Caco-2 (cell line): ENCODE measurements at regions of chr12 and their contacts with region 1.

Region 1: GRCh38 chr12:19129486-19130223 is at the start of gene PLEKHA5:
- DNase-seq: peak; percentile 88
- H3K4me3 ChIP-seq: peak within 1 kb of the TSS; percentile 75
- H3K4me3 Mint-ChIP-seq: peak within 1 kb of the TSS; percentile 91
- H3K27ac Mint-ChIP-seq: peak within 1 kb of the TSS; percentile 63
- H3K4me1 ChIP-seq: 0 out of 2 replicates have a peak, but pooled peaks cover 13% of the 10 kb centered on the region
- H3K4me1 Mint-ChIP-seq: peaks cover 11% of the 10 kb centered on the region
- H3K27me3 ChIP-seq: no peaks in the 10 kb centered on the region
- H3K27me3 Mint-ChIP-seq: no peaks in the 10 kb centered on the region
- CTCF ChIP-seq: peak; percentile 36 to 74
- total RNA-seq, gene PLEKHA5: 69.1 and 79.2 TPM in 2 replicates

Region 2: GRCh38 chr12:18861287-18861858 is 268.3 kb before region 1 on chr12:
- CTCF ChIA-PET with region 1: no interaction called
- POLR2A ChIA-PET with region 1: no interaction called
- intact Hi-C with region 1: loop called (anchors 1 kb)
- DNase-seq: peak in 1 of 2 experiments; percentile 56
- H3K4me3 ChIP-seq: no peak overlapping the region
- H3K4me3 Mint-ChIP-seq: no peak overlapping the region
- H3K27ac Mint-ChIP-seq: no peak overlapping the region
- H3K4me1 ChIP-seq: no peaks in the 10 kb centered on the region
- H3K4me1 Mint-ChIP-seq: no peaks in the 10 kb centered on the region
- H3K27me3 ChIP-seq: no peaks in the 10 kb centered on the region; the same call in 1 of the 2 replicates
- H3K27me3 Mint-ChIP-seq: peaks cover 13% of the 10 kb centered on the region
- CTCF ChIP-seq: peak; percentile 66 to 92

Region 3: DNA sequence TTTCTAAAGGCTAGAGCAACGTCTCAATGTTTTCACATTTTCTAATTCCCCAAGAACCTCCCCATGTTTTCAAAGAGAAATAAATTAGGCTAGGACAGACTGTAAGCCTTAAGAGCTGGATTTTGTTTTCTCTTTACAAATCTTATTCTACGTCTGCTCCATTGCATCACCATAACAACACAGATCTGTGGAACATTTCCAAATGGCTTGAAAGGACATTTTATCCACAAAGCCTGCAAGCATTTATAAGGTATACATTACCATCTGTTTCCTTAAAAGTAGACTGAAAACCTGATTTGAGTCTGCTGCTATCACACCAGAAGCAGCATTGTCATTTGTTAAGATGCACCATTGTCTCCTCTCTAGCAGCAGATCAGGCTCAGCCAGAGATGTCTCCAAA is 115.4 kb before region 1 on chr12:
- CTCF ChIA-PET with region 1: no interaction called
- POLR2A ChIA-PET with region 1: no interaction called
- intact Hi-C with region 1: loop called (anchors 2 kb)
- DNase-seq: no peak
- H3K4me3 ChIP-seq: no peak overlapping the region
- H3K4me3 Mint-ChIP-seq: no peak overlapping the region
- H3K27ac Mint-ChIP-seq: no peak overlapping the region
- H3K4me1 ChIP-seq: peaks cover 17% of the 10 kb centered on the region
- H3K4me1 Mint-ChIP-seq: peaks cover 29% of the 10 kb centered on the region
- H3K27me3 ChIP-seq: no peaks in the 10 kb centered on the region
- H3K27me3 Mint-ChIP-seq: no peaks in the 10 kb centered on the region
- CTCF ChIP-seq: no peak

Region 4: DNA sequence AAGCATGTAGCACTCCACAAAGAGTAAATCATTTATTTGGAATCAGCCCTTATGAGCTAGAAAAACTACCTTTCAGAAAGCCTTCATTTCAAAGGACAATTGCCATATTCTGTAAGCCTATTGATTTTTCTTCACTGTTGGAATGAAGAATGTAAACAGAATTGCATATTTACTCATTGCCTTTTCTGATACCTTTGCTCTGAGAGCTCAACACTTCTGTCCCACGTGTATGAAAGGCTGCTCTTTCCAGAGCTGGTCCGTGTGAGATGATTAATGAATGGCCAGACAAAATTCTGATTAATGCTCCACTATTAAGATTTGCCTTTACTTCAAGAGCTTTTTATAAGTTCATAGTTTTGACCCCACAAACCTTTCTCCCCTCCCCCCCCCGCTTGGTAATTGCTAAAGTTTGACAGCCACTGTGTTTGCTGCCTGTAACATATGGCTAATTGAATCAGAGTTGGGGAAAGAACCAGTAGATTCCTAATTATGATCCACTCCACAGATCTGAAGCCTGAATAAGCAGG is 63.1 kb before region 1 on chr12:
- CTCF ChIA-PET with region 1: no interaction called
- POLR2A ChIA-PET with region 1: no interaction called
- intact Hi-C with region 1: loop called (anchors 1 kb)
- DNase-seq: peak in 1 of 2 experiments; percentile 27
- H3K4me3 ChIP-seq: peak overlapping the region; percentile 12; the same call in 1 of the 2 replicates
- H3K4me3 Mint-ChIP-seq: peak overlapping the region; percentile 61
- H3K27ac Mint-ChIP-seq: peak overlapping the region; percentile 68
- H3K4me1 ChIP-seq: peaks cover 26% of the 10 kb centered on the region
- H3K4me1 Mint-ChIP-seq: peaks cover 32% of the 10 kb centered on the region
- H3K27me3 ChIP-seq: no peaks in the 10 kb centered on the region
- H3K27me3 Mint-ChIP-seq: no peaks in the 10 kb centered on the region
- CTCF ChIP-seq: no peak

Region 5: DNA sequence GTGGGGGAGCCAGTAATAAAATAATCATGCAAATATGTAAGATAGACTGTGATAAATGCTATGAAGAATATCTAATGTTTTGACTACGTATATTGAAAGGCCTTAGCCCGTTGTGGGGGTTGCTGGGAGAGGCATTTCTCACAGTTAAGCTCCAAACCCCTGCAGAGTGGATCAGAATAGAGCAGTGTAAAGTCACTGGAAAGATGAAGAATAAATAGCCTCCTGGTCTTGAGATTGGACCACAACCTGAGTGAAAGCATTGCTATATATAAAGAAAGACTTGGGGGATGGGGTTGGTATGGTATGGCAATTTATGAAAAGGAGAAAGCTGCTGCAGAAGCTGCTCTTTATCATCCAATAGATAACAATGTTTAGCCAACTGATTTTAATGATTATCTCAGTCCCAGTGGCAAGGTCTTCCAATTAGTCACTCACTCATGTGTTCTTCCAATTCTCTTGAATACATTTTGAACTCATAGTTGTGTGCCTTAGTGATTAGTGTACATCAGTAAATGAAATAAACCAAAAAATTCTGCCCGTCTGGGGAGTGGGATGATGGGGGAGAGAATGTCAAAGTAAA is 10.1 kb after region 1 on chr12:
- CTCF ChIA-PET with region 1: no interaction called
- POLR2A ChIA-PET with region 1: no interaction called
- intact Hi-C with region 1: loop called (anchors 1 kb)
- DNase-seq: no peak
- H3K4me3 ChIP-seq: no peak overlapping the region
- H3K4me3 Mint-ChIP-seq: no peak overlapping the region
- H3K27ac Mint-ChIP-seq: peak overlapping the region; percentile 27
- H3K4me1 ChIP-seq: peaks cover 32% of the 10 kb centered on the region
- H3K4me1 Mint-ChIP-seq: peaks cover 52% of the 10 kb centered on the region
- H3K27me3 ChIP-seq: no peaks in the 10 kb centered on the region
- H3K27me3 Mint-ChIP-seq: no peaks in the 10 kb centered on the region
- CTCF ChIP-seq: no peak

Region 6: DNA sequence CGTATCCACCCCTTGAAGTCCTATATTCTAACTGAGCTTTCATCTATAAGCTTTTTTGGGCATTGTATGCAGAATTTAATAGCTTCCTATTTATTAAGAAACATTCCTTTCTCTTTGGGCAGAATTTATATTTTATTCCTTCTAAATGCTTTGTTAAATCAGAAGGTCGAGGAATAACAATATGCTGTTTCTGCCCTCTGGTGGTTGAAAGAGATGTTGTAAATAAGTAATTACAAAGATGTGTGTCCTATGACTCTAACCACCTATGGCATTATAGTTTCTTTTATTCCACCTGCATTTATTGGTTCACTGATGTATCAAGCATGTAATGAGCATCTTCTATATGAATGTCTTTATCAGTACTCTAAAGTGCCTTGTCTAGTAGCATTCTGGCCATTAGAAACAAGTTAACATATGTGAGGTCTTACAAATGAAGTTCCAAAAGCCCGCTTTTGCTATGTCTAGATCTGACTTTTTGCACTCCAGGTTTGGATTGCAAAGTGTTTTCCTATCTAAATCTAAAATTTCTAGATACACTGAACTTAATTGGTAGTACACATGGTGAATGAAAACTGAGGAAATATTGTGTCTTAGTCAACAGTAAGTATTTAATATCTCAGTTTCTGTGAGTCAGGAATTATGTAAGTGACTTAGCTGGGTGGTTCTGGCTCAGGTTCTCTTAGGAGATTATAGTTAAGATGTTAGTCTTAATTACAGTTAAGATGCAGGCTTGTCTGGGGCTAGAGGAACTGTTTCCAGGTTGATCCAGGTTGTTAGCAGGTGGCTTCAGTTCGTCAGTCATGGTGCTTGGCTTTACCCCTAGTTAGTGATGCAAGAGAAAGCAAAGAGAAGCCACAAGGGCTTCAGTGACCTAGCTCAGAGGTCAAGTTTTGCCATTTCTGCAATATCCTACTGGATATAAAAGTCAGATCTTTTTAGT is 57.3 kb after region 1 on chr12:
- CTCF ChIA-PET with region 1: no interaction called
- POLR2A ChIA-PET with region 1: no interaction called
- intact Hi-C with region 1: loop called (anchors 2 kb)
- DNase-seq: peak in 1 of 2 experiments; percentile 50
- H3K4me3 ChIP-seq: no peak overlapping the region
- H3K4me3 Mint-ChIP-seq: no peak overlapping the region
- H3K27ac Mint-ChIP-seq: no peak overlapping the region
- H3K4me1 ChIP-seq: no peaks in the 10 kb centered on the region
- H3K4me1 Mint-ChIP-seq: peaks cover 15% of the 10 kb centered on the region
- H3K27me3 ChIP-seq: no peaks in the 10 kb centered on the region
- H3K27me3 Mint-ChIP-seq: no peaks in the 10 kb centered on the region
- CTCF ChIP-seq: peak; percentile 57 to 85